Body of pancreas (tissue), 4 donors: ENCODE measurements at regions of chr9 and their contacts with region 1.

Region 1: DNA sequence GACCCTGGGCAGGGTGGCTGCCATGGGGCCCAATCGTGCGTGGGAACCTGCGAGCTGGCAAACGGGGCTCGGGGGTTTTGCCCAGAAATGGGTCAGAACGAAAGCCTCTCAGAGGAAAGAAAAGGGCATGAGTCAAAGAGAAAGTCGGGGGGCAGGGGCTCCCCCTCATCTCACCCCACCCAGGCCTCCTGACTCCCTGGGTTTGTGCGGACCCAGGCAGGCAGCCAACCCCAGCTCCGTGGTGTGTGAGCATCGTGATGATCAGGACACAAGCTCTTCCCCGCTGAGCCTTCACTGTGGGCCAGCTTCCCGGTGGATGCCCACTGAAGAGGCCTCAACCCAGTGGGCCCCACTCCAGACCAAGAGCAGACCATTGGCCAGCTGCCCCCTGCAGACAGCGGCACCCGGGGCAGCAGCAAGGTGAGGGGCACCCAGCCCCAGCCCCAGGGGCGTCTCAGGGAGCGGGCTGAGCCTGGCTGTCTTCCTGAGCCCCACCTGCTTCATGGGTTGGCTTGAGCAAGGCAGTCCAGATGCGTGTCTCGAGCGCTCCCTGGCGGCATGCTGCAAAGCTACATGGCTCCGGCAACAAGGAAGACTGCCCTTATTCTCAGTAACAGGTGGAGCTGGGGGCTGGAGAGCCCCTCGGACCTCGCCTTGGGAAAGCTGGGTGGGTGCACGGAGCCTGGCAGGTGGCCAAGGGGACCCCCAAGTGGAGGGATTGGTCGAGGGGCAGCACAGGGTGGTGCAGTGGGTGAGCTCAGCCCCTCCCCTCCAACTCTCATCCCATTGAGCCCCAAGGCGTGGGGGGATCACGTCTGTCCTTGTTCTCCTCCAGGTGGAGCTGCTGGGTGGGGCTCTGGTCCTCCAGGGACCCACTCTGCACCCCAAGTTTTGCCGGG is 3.2 kb upstream of the FUT7 start:
- DNase-seq: peak; percentile 79 to 85 (median 80)
- ATAC-seq: peak; percentile 88
- H3K4me3 ChIP-seq: no peak overlapping the region
- H3K27ac ChIP-seq: no peak overlapping the region
- H3K4me1 ChIP-seq: peaks cover 13% of the 10 kb centered on the region
- H3K27me3 ChIP-seq: no peaks in the 10 kb centered on the region
- CTCF ChIP-seq: peak; percentile 84 to 92 (median 90)
- POLR2A ChIP-seq: no peak

Region 2: DNA sequence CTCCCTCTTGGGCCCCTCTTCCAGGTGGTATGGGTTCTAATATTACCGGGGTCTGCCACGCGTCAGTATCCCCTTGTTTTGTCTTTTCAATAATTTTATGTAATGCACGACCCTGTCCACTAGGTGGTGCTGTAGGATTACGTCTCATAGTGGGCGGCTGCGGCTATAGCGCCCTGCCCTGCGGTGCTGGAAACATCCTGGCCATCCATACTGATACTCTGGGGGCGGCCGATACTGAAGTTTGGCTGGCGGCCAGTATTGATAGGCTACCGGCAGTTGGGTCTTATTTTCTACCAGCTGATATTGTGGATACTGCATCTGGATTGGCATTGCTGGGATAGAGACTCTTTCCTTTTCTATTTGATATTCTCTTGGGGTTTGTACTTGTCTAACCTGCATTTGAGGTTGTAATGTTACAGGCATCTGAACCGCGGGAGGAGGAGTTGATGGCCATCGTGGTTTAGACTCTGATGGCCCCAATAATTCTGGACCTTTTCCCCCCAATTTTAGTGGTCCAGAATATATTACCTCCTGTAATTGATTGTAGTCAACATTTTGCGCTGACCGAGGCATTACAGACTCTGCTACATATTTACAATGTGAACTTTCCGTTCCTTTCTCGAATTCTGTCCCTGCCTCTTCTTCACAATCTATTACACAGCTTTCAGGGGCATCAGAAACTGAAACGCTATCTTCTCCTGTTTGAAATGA is 247.3 kb before region 1 on chr9:
- intact Hi-C with region 1: loop called (anchors 5 kb)
- DNase-seq: peak; percentile 63 to 75 (median 70)
- ATAC-seq: no peak
- H3K4me3 ChIP-seq: no peak overlapping the region
- H3K27ac ChIP-seq: peak overlapping the region in 1 of 4 donors; percentile 97
- H3K4me1 ChIP-seq: peaks cover 57% of the 10 kb centered on the region
- H3K27me3 ChIP-seq: no peaks in the 10 kb centered on the region
- CTCF ChIP-seq: peak; percentile 71 to 88 (median 85)
- POLR2A ChIP-seq: no peak

Region 3: GRCh38 chr9:137390543-137391410 is 355.7 kb after region 1 on chr9:
- intact Hi-C with region 1: no loop called
- DNase-seq: peak; percentile 34 to 70 (median 54)
- ATAC-seq: peak; percentile 48
- H3K4me3 ChIP-seq: no peak overlapping the region
- H3K27ac ChIP-seq: peak overlapping the region in 2 of 4 donors; percentile 62 to 65
- H3K4me1 ChIP-seq: peaks cover 7% of the 10 kb centered on the region
- H3K27me3 ChIP-seq: no peaks in the 10 kb centered on the region
- CTCF ChIP-seq: no peak
- POLR2A ChIP-seq: no peak